Ovary (tissue), 10 donors: ENCODE measurements at regions of chr20 and their contacts with region 1.

Region 1: DNA sequence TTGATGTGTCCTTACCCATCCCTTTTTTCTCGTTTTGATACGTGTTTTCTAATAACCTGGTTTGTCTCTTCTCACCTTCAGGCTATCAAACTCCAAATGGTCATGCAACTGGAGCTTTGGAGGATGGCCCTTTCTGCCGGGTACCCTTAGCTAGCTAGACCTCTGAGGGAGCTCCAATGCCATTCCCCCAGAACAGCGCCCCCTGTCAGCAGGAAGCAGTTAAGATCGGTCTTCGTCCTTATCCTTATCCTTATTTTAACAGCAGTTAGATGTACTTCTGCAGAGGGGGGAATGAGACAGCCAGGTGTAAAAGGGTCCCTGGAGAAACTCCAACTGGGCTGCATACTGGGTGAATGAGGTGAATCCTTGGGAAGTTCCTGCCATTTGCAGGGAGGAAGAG is 37.2 kb downstream of the SEL1L2 start:
- DNase-seq: no peak
- H3K4me3 ChIP-seq: no peak overlapping the region
- H3K27ac ChIP-seq: no peak overlapping the region
- H3K4me1 ChIP-seq: no peaks in the 10 kb centered on the region
- H3K27me3 ChIP-seq: no peaks in the 10 kb centered on the region
- CTCF ChIP-seq: no peak
- EP300 ChIP-seq: no peak
- POLR2A ChIP-seq: no peak

Region 2: DNA sequence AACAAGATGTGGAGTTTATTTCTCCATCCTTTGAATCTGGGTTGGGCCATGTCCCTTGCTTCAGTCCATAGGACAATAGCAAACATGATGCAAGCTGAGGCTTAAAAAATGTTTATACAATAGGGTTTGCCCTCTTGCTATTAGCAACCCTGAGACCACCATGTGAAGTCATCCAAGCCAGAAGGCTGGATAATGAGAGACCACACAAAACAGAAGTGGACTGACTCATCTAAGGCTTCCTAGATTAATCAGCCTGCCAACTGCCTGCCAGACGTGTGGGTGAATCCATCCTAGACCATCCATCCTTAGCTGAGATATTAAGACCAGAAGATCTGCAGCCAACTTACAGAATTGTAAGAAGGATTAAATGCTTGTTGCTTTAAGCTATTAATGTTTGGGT is 770.2 kb before region 1 on chr20:
- intact Hi-C with region 1: loop called in 1 of 4 experiments (anchors 10 kb)
- DNase-seq: no peak
- H3K4me3 ChIP-seq: no peak overlapping the region
- H3K27ac ChIP-seq: no peak overlapping the region
- H3K4me1 ChIP-seq: no peaks in the 10 kb centered on the region
- H3K27me3 ChIP-seq: no peaks in the 10 kb centered on the region
- CTCF ChIP-seq: no peak
- EP300 ChIP-seq: no peak
- POLR2A ChIP-seq: no peak

Region 3: GRCh38 chr20:13898011-13898612 is 55.1 kb before region 1 on chr20:
- intact Hi-C with region 1: loop called in 1 of 4 experiments (anchors 10 kb)
- DNase-seq: no peak
- H3K4me3 ChIP-seq: no peak overlapping the region
- H3K27ac ChIP-seq: no peak overlapping the region
- H3K4me1 ChIP-seq: no peaks in the 10 kb centered on the region
- H3K27me3 ChIP-seq: no peaks in the 10 kb centered on the region
- CTCF ChIP-seq: no peak
- EP300 ChIP-seq: no peak
- POLR2A ChIP-seq: no peak